ENCODE measurements at regions of chr2 and their contacts with region 1.

Region 1: DNA sequence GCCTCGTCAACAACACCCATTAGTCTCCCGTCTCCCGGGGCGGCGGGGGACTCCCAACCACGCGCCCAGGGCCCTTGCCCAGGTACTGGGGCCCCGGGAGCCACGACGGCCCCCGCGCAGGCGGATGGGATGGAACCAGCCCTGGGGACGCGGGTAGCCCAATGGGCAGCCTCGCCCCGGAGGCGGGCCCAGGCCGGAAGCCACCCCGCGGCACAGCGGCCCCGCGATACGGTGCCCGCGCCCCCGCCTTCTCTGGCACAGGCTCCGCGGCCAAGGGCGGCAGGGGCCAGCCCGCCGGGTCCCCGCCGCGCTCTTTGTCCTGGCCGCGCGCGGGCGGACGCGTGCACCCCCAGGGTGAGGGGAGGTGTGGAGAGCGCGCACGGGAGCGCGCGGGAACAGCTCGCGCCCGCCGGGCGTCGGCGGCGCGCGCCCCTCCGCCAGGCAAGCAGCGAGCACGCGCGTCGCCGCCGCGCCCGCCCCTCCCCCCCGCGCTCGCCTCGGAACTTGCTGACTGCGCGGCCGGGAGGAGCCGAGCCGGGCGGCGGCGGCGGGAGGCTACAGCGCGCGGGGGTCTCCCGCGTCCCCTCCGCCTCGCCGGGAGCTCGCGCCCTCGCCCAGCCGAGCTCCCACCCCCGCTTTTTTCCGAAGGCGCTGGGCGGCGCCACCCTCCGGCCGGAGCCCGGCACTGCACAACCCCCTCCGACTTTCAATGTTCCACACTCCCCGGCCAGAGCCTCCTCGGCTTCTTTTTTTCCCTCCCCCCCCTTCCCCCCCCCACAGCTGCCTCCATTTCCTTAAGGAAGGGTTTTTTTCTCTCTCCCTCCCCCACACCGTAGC is at the start of gene UBE2E3:
- DNase-seq: peak; percentile 86
- ATAC-seq: peak; percentile 64
- H3K4me3 ChIP-seq: peak within 1 kb of the TSS; percentile 81
- H3K27ac ChIP-seq: peak within 1 kb of the TSS; percentile 99
- H3K4me1 ChIP-seq: peaks cover 46% of the 10 kb centered on the region
- H3K27me3 ChIP-seq: no peaks in the 10 kb centered on the region
- CTCF ChIP-seq: peak; percentile 58
- total RNA-seq, gene UBE2E3: 66.6 and 95.6 TPM in 2 replicates

Region 2: GRCh38 chr2:180240774-180241173 is 739.5 kb before region 1 on chr2:
- CTCF ChIA-PET with region 1: interaction called, 3 read pairs
- POLR2A ChIA-PET with region 1: no interaction called
- intact Hi-C with region 1: loop called (anchors 2 kb)
- DNase-seq: peak; percentile 65
- ATAC-seq: peak; percentile 59; the same call in 1 of the 2 replicates
- H3K4me3 ChIP-seq: no peak overlapping the region
- H3K27ac ChIP-seq: no peak overlapping the region
- H3K4me1 ChIP-seq: no peaks in the 10 kb centered on the region
- H3K27me3 ChIP-seq: no peaks in the 10 kb centered on the region
- CTCF ChIP-seq: peak; percentile 71

Region 3: DNA sequence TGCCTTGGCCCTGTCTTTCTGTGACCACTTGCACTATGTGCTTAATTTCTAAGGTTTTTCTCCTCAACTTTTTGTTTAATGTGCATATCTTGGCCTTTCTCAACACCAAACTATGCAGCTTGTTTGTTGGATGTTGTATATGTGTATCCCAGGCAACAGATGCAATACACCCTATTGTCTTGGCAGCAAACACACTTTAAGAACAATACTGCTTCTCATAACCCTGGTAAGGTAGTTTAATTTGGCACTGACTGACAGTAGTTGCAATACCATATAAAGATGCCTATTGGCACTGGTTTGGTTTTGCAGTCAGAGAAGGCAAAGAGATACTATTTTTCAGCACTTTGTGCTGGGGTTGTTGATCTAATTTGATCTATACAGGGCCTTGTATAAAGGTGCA is 612.5 kb before region 1 on chr2:
- CTCF ChIA-PET with region 1: no interaction called
- POLR2A ChIA-PET with region 1: no interaction called
- intact Hi-C with region 1: loop called (anchors 5 kb)
- DNase-seq: peak; percentile 68
- ATAC-seq: peak; percentile 93
- H3K4me3 ChIP-seq: no peak overlapping the region
- H3K27ac ChIP-seq: peak overlapping the region; percentile 71
- H3K4me1 ChIP-seq: peaks cover 25% of the 10 kb centered on the region
- H3K27me3 ChIP-seq: no peaks in the 10 kb centered on the region
- CTCF ChIP-seq: no peak

Region 4: DNA sequence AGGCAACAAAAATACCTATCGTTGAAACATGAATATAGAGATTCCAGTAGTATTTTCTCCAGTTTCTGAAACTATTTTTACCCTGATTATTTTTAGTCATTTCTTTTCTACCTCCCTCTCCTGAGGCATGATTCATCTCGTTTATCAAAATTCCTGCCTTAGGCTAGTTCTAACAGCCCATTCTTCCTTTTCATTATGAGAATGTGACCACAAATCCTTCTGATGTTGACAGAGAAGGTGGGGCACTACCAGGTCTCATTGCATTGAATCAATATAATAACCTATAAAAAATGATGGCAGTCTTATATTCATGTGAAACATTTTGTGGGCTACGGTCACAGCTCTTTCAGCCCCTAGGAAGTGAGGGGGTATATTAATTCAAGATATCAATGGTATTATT is 406.4 kb before region 1 on chr2:
- CTCF ChIA-PET with region 1: no interaction called
- POLR2A ChIA-PET with region 1: no interaction called
- intact Hi-C with region 1: loop called (anchors 1 kb)
- DNase-seq: peak; percentile 97
- ATAC-seq: peak; percentile 89
- H3K4me3 ChIP-seq: no peak overlapping the region
- H3K27ac ChIP-seq: peak overlapping the region; percentile 73
- H3K4me1 ChIP-seq: peaks cover 48% of the 10 kb centered on the region
- H3K27me3 ChIP-seq: no peaks in the 10 kb centered on the region
- CTCF ChIP-seq: no peak

Region 5: GRCh38 chr2:180722551-180723239 is 257.6 kb before region 1 on chr2:
- CTCF ChIA-PET with region 1: interaction called, 5 read pairs
- POLR2A ChIA-PET with region 1: interaction called, 6 read pairs
- intact Hi-C with region 1: loop called (anchors 1 kb)
- DNase-seq: peak; percentile 77
- ATAC-seq: peak; percentile 84
- H3K4me3 ChIP-seq: no peak overlapping the region
- H3K27ac ChIP-seq: peak overlapping the region; percentile 71
- H3K4me1 ChIP-seq: peaks cover 27% of the 10 kb centered on the region
- H3K27me3 ChIP-seq: no peaks in the 10 kb centered on the region
- CTCF ChIP-seq: no peak

Region 6: GRCh38 chr2:180763263-180763989 is 216.9 kb before region 1 on chr2:
- CTCF ChIA-PET with region 1: interaction called, 3 read pairs
- POLR2A ChIA-PET with region 1: no interaction called
- intact Hi-C with region 1: loop called (anchors 1 kb)
- DNase-seq: peak; percentile 78
- ATAC-seq: peak; percentile 84
- H3K4me3 ChIP-seq: no peak overlapping the region
- H3K27ac ChIP-seq: peak overlapping the region; percentile 66
- H3K4me1 ChIP-seq: peaks cover 38% of the 10 kb centered on the region
- H3K27me3 ChIP-seq: no peaks in the 10 kb centered on the region
- CTCF ChIP-seq: no peak

Region 7: GRCh38 chr2:181058378-181059269 is 78.3 kb after region 1 on chr2:
- CTCF ChIA-PET with region 1: interaction called, 4 read pairs
- POLR2A ChIA-PET with region 1: no interaction called
- intact Hi-C with region 1: loop called (anchors 5 kb)
- DNase-seq: peak; percentile 72
- ATAC-seq: 0 out of 2 replicates have a peak, but pooled peaks have one; percentile 25
- H3K4me3 ChIP-seq: no peak overlapping the region
- H3K27ac ChIP-seq: no peak overlapping the region
- H3K4me1 ChIP-seq: peaks cover 7% of the 10 kb centered on the region; the same call in 1 of the 2 replicates
- H3K27me3 ChIP-seq: no peaks in the 10 kb centered on the region
- CTCF ChIP-seq: peak; percentile 93

Region 8: DNA sequence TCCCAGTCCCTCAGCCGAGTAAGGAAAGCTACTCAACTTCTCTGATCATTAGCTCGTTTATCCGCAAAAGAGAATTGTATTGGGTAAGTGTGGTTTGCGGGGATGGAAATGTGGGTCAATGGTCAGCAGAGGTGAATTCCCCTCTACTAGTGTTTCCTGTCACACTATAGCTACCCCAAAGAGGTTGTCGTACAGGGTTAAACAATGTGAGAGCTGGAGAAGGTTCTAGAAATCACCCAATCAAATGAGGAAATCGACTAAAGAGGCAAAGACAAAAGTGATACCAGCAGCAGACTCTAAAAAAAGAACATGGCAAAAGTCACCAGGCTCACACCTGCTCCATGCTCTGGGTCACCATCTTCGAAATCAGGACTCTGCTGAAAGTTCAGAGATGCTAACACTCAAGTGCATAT is 332.2 kb after region 1 on chr2:
- CTCF ChIA-PET with region 1: no interaction called
- POLR2A ChIA-PET with region 1: no interaction called
- intact Hi-C with region 1: no loop called
- DNase-seq: no peak
- ATAC-seq: no peak
- H3K4me3 ChIP-seq: no peak overlapping the region
- H3K27ac ChIP-seq: no peak overlapping the region
- H3K4me1 ChIP-seq: no peaks in the 10 kb centered on the region
- H3K27me3 ChIP-seq: no peaks in the 10 kb centered on the region
- CTCF ChIP-seq: no peak